ENCODE measurements at regions of chr11 and their contacts with region 1.

Region 1: DNA sequence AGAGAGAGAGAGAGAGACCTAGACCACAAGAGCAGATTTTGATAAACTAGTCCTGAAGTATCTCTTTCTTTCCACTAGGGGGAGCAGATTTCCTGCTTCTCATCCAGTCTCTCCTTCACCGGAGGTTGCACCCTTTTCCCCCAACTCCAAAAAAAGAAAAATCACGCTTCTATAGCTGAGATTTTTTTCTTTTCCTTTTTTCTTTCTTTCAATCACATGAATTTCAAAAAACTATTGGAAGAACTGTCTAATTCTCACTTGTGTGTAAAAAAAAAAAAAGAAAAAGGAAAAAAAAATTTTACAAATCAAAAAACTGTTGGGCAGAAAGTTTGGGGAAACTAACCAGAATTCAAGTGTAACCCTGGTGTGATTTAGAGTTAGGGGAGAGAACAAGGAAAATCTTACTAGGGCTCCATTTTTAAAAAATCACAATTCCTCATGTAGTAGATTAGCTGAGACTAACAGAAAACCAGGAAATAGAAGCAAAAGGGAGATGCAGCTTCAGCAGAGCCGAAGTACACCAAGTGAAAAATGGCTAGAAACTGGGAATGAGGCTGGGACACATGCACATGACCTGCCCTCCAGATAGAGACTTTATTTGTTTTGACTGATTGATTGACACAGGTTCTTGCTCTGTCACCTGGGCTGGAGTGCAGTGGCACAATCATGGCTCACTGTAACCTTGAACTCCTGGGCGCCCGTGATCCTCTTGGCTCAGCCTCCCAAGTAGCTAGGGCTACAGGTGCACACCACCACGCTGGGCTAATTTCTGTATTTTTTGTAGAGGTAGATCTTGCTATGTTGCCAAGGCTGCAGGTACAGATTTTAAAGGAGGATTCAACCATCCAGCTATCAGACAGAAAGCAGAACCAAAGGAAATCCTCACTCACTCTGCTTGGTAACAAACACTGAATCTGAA is 27.1 kb downstream of the SDHD start:
- DNase-seq: no peak
- ATAC-seq: peak; percentile 78
- H3K4me3 Mint-ChIP-seq: no peak overlapping the region
- H3K27ac Mint-ChIP-seq: no peak overlapping the region
- H3K4me1 Mint-ChIP-seq: no peaks in the 10 kb centered on the region
- H3K27me3 Mint-ChIP-seq: no peaks in the 10 kb centered on the region
- CTCF ChIP-seq: peak; percentile 45; the same call in 1 of the 2 replicates

Region 2: GRCh38 chr11:112100462-112100861 is 13.3 kb before region 1 on chr11:
- CTCF ChIA-PET with region 1: interaction called, 14 read pairs
- POLR2A ChIA-PET with region 1: interaction called, 3 read pairs
- DNase-seq: no peak
- ATAC-seq: no peak
- H3K4me3 Mint-ChIP-seq: no peak overlapping the region
- H3K27ac Mint-ChIP-seq: no peak overlapping the region
- H3K4me1 Mint-ChIP-seq: no peaks in the 10 kb centered on the region
- H3K27me3 Mint-ChIP-seq: no peaks in the 10 kb centered on the region
- CTCF ChIP-seq: no peak

Region 3: GRCh38 chr11:112174789-112175598 is 61.2 kb after region 1 on chr11 and contains the start of gene BCO2:
- CTCF ChIA-PET with region 1: interaction called, 11 read pairs
- POLR2A ChIA-PET with region 1: no interaction called
- DNase-seq: peak; percentile 69
- ATAC-seq: peak; percentile 95
- H3K4me3 Mint-ChIP-seq: peak within 1 kb of the TSS; percentile 58
- H3K27ac Mint-ChIP-seq: no peak within 1 kb of the TSS
- H3K4me1 Mint-ChIP-seq: no peaks in the 10 kb centered on the region
- H3K27me3 Mint-ChIP-seq: no peaks in the 10 kb centered on the region
- CTCF ChIP-seq: peak; percentile 58
- total RNA-seq, gene BCO2: 0.48 to 1.3 TPM (median 1.0 TPM) in 3 replicates

Measured in WTC11 (cell line).